Caki2 (cell line): ENCODE measurements at regions of chr15 and their contacts with region 1.

Region 1: DNA sequence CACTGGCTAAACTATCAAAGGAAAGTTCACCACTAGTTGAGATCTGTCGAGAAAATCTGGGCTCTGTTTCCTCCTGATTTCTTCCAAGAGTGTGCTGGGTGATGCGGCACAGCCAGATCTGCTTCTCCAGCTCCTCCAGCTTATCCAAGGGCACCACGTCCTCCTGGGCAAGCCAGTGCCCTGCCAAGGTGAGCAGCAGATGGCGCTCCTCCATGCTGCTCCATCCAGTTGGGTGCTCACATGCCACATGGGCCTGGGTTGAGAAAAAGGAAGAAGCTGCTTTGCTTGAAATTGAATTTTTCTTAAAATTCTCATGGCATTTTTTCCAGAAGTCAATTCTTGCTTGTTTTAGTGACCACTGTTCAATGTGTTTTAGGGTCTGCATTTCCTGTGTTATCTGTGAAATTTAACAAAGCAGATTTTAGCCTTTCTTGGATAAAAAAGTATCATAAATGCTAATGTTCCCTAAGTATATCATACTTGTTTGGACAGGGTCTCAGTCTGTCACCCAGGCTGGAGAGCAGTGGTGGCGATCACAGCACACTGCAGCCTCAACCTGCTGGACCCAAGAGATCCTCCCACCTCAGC is 47.3 kb downstream of the EIF3J start:
- DNase-seq: peak; percentile 26

Region 2: DNA sequence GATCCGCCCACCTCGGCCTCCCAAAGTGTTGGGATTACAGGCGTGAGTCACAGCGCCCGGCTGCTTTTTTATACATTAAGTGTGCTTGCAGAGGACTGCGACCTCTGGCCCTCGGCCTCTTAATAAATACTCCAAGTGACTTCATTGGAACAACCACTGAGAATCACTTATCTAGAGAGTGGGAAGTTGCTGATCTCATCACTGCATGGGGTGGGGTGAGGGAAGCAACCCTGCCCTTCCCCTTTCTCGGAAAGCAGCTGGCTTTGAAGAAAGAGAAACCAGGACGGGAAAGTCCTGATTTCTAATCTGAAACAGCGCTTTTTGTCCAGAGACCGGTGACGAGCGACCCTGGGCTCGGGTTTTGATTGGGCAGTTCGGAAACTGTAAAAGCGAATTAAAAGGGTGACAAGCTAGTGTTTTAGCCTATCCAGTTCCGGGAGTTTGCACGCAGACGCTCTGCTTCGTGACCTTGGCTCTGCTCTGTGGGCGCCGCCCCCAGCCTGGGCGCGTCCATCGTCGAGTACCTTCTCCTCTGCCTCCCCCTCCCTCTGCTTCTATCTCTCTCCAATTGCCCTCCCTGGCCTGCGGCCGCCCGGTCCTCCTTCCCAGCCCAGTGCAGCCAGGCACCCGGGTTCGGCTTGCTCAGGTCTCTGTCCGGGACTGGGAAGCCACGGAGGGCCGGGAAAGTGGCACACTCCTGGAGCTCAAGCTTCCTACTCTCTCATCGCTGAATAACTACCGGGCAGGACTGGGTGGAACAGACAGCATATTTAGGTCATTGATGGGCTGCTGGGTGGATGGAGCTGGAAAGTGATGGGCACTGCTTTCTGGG is 144.5 kb after region 1 on chr15:
- in situ Hi-C with region 1: loop called (anchors 25 kb)
- DNase-seq: peak; percentile 100

Region 3: DNA sequence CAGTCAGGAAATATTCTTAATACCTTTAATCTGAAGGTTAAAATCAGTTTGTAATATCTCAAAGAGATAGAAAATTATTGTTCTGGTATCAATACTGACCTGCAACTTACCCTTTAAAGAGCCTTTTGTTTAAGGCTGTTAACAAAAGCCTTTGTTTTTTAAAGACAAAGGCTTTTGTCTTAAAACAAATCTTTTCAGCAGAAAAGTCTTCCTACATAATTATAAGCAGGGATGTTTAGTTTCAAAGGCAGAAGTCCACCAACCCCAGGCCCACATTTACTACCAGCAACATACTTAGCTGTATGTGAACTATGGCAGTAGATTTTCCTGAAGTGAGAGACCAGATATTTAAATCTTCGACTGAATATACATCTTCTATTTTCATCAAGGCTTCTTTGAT is 902.1 kb after region 1 on chr15:
- in situ Hi-C with region 1: no loop called
- DNase-seq: no peak